CD4-positive, alpha-beta T cell (primary cell): ENCODE measurements at regions of chr19 and their contacts with region 1.

Region 1: GRCh38 chr19:45681391-45682015 is 10.2 kb downstream of the SNRPD2 start:
- DNase-seq: peak; percentile 69 to 92 (median 84)
- ATAC-seq: peak; percentile 77
- H3K4me3 ChIP-seq: peak overlapping the region; percentile 47
- H3K4me3 Mint-ChIP-seq: peak overlapping the region; percentile 82
- H3K27ac ChIP-seq: no peak overlapping the region
- H3K27ac Mint-ChIP-seq: no peak overlapping the region
- H3K4me1 ChIP-seq: peaks cover 29% of the 10 kb centered on the region
- H3K4me1 Mint-ChIP-seq: peaks cover 21% of the 10 kb centered on the region
- H3K27me3 ChIP-seq: no peaks in the 10 kb centered on the region
- H3K27me3 Mint-ChIP-seq: no peaks in the 10 kb centered on the region
- CTCF ChIP-seq: peak; percentile 97

Region 2: GRCh38 chr19:45523642-45524256 is 157.8 kb before region 1 on chr19:
- CTCF ChIA-PET with region 1: no interaction called
- POLR2A ChIA-PET with region 1: no interaction called
- intact Hi-C with region 1: loop called in 1 of 2 experiments (anchors 5 kb)
- DNase-seq: peak; percentile 54 to 92 (median 66)
- ATAC-seq: peak; percentile 99
- H3K4me3 ChIP-seq: no peak overlapping the region
- H3K4me3 Mint-ChIP-seq: no peak overlapping the region
- H3K27ac ChIP-seq: no peak overlapping the region
- H3K27ac Mint-ChIP-seq: peak overlapping the region; percentile 53
- H3K4me1 ChIP-seq: peaks cover 11% of the 10 kb centered on the region
- H3K4me1 Mint-ChIP-seq: peaks cover 19% of the 10 kb centered on the region
- H3K27me3 ChIP-seq: no peaks in the 10 kb centered on the region
- H3K27me3 Mint-ChIP-seq: no peaks in the 10 kb centered on the region
- CTCF ChIP-seq: peak; percentile 76

Region 3: DNA sequence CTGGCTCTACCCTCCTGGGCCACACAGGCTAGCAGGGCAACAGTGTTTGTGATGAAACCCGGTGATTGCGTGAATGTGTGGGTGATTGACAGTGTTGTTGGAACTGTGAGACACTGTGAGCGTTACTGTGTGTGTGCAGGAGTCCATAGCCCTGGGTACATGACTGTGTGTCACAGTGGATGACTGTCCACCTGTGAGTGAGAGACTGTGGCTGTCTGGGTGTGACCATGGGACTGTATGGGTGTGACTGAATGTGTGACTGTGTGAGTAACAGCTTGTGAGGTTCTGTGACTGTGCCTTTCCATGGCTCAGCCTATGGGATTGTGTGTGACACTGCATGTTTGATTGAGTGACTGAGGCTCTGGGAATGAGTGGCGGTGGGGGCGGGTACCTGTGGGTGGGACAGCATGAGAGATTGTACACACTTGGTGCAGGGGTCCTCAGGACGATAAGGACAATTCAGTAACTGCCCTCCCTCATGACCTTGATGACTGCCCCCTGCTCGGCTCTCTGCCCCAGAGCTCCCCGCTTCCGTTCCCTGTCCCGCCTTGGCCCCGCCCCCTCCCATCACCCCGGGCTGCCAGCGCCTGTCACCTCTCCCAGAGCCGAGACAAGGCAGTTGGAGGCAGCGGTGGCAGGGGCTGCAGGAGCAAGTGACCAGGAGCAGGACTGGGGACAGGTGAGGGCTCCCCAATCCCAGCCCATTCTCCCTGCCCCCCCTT is 13.7 kb before region 1 on chr19 and contains the start of gene GIPR:
- CTCF ChIA-PET with region 1: interaction called, 9 read pairs
- POLR2A ChIA-PET with region 1: interaction called, 12 read pairs
- intact Hi-C with region 1: no loop called
- DNase-seq: peak in 12 of 14 experiments; percentile 34 to 76 (median 57)
- ATAC-seq: peak; percentile 52
- H3K4me3 ChIP-seq: peak within 1 kb of the TSS; percentile 57
- H3K4me3 Mint-ChIP-seq: peak within 1 kb of the TSS; percentile 87
- H3K27ac ChIP-seq: no peak within 1 kb of the TSS
- H3K27ac Mint-ChIP-seq: no peak within 1 kb of the TSS
- H3K4me1 ChIP-seq: peaks cover 46% of the 10 kb centered on the region
- H3K4me1 Mint-ChIP-seq: peaks cover 44% of the 10 kb centered on the region
- H3K27me3 ChIP-seq: peaks cover 9 to 18% of the 10 kb centered on the region in 2 experiments
- H3K27me3 Mint-ChIP-seq: peaks cover 45% of the 10 kb centered on the region
- CTCF ChIP-seq: no peak
- total RNA-seq, gene GIPR: 2.4 to 3.0 TPM